Kidney (tissue), 22 donors: ENCODE measurements at regions of chr22 and their contacts with region 1.

Region 1: DNA sequence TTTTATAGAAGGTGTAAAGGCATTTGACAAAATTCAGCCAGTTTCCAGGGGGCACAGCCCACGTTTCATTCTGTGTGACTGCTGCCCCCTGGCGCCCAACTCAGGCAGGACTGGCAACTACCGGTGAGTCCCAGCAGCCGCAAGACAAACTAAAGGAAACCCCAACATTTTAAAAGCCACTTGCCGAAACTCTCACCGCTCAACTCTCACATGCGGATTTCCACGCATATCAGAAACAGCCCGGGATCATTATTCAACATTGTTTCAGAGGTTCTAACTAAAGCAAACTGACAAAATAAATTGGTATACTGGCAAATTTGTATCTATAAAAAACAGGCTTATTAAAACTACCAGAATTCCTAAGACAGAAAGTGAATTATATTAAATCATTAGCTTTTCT is 48.2 kb downstream of the MORC2 start:
- DNase-seq: peak; percentile 78 to 86 (median 78)
- H3K4me3 ChIP-seq: peak overlapping the region in 1 of 3 donors; percentile 56
- H3K27ac ChIP-seq: no peak overlapping the region
- H3K4me1 ChIP-seq: no peaks in the 10 kb centered on the region
- H3K27me3 ChIP-seq: no peaks in the 10 kb centered on the region
- CTCF ChIP-seq: peak; percentile 90

Region 2: GRCh38 chr22:30763815-30764686 is 156.4 kb before region 1 on chr22:
- intact Hi-C with region 1: loop called (anchors 10 kb)
- DNase-seq: peak in 4 of 5 donors; percentile 63 to 88 (median 70)
- H3K4me3 ChIP-seq: no peak overlapping the region
- H3K27ac ChIP-seq: no peak overlapping the region
- H3K4me1 ChIP-seq: peaks cover 0 to 2% (median 0%) of the 10 kb centered on the region in 3 donors
- H3K27me3 ChIP-seq: no peaks in the 10 kb centered on the region
- CTCF ChIP-seq: peak; percentile 55

Region 3: GRCh38 chr22:31036671-31037550 is 116.5 kb after region 1 on chr22:
- intact Hi-C with region 1: no loop called
- DNase-seq: peak in 2 of 5 donors; percentile 54 to 69
- H3K4me3 ChIP-seq: peak overlapping the region in 1 of 3 donors; percentile 10
- H3K27ac ChIP-seq: no peak overlapping the region
- H3K4me1 ChIP-seq: peaks cover 0 to 5% (median 2%) of the 10 kb centered on the region in 3 donors
- H3K27me3 ChIP-seq: no peaks in the 10 kb centered on the region
- CTCF ChIP-seq: no peak